H1 (cell line): ENCODE measurements at regions of chr13 and their contacts with region 1.

Region 1: GRCh38 chr13:66689628-66690027 is 540.5 kb downstream of the PCDH9 start:
- DNase-seq: no peak
- H3K4me3 ChIP-seq: no peak overlapping the region
- H3K27ac ChIP-seq: no peak overlapping the region
- H3K4me1 ChIP-seq: no peaks in the 10 kb centered on the region
- H3K27me3 ChIP-seq: no peaks in the 10 kb centered on the region
- CTCF ChIP-seq: peak in 2 of 3 experiments; percentile 8 to 43; a peak in 2 of 4 replicates
- EP300 ChIP-seq: no peak
- POLR2A ChIP-seq: no peak
- RAD21 ChIP-seq: peak; percentile 57 to 59

Region 2: DNA sequence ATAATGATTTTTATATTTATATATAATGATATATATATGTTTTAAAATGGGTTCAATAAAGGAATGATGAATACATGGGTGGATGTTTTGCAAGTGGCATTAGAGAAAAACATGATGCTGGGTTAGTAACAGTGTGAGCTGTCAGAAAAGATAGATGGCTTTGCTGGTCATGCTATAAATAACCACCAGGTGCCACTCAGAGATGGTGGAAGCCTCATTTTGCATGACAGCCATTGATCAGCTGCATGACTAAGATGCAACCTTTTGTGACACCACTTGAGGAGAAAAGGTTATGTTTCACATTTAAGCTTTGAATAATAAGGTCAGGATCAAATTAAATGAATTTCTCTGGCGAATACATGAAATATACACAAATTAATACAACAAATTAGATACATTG is 197.1 kb before region 1 on chr13:
- CTCF ChIA-PET with region 1: interaction called, 10 read pairs
- POLR2A ChIA-PET with region 1: no interaction called
- DNase-seq: no peak
- H3K4me3 ChIP-seq: no peak overlapping the region
- H3K27ac ChIP-seq: no peak overlapping the region
- H3K4me1 ChIP-seq: no peaks in the 10 kb centered on the region
- H3K27me3 ChIP-seq: no peaks in the 10 kb centered on the region
- CTCF ChIP-seq: peak in 2 of 3 experiments; percentile 61 to 62; a peak in 3 of 4 replicates
- EP300 ChIP-seq: no peak
- POLR2A ChIP-seq: no peak
- RAD21 ChIP-seq: peak; percentile 86 to 87

Region 3: GRCh38 chr13:66665991-66666390 is 23.6 kb before region 1 on chr13:
- CTCF ChIA-PET with region 1: no interaction called
- POLR2A ChIA-PET with region 1: no interaction called
- DNase-seq: no peak
- H3K4me3 ChIP-seq: no peak overlapping the region
- H3K27ac ChIP-seq: no peak overlapping the region
- H3K4me1 ChIP-seq: no peaks in the 10 kb centered on the region
- H3K27me3 ChIP-seq: no peaks in the 10 kb centered on the region; a peak in 1 of 7 replicates
- CTCF ChIP-seq: no peak
- EP300 ChIP-seq: no peak
- POLR2A ChIP-seq: no peak
- RAD21 ChIP-seq: no peak

Region 4: GRCh38 chr13:66805657-66806056 is 116.0 kb after region 1 on chr13:
- CTCF ChIA-PET with region 1: no interaction called
- POLR2A ChIA-PET with region 1: no interaction called
- DNase-seq: no peak
- H3K4me3 ChIP-seq: no peak overlapping the region
- H3K27ac ChIP-seq: no peak overlapping the region
- H3K4me1 ChIP-seq: no peaks in the 10 kb centered on the region; a peak in 1 of 7 replicates
- H3K27me3 ChIP-seq: no peaks in the 10 kb centered on the region
- CTCF ChIP-seq: no peak
- EP300 ChIP-seq: no peak
- POLR2A ChIP-seq: no peak
- RAD21 ChIP-seq: no peak